ENCODE measurements at regions of chr6 and their contacts with region 1.

Region 1: DNA sequence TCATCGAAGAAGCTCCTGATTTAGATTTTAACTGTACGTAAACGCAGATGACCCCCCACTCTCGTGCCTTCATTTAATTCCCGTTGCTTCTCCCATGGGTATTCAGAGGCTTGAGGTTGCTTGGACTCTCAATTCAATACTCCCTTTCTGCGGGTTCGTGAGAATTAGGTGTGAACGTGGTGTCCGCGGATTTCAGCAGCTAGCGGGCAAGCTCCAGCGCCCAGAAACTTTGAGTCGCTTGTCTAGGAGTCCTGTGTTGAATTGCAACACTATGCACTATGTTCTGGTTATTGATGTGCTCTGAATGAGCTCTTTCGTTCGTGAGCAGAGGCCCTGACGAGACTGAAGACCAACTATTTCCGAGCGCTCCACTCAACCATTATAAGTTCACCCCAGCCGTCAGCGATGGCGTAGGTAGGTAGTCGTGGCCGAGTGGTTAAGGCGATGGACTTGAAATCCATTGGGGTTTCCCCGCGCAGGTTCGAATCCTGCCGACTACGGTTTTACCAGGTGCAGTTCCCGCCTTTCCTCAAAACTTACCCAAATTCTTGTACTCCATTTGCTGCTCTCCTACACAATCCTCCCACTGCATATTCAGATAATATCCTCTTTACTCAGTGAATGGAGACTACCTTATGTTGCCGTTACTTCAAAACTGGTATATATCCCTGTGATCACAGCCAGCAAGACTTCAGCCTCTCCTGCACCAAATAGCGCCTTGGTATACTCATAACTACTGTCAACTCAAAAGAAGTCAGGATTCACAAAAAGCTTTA is 72.6 kb upstream of the ZNF184 start:
- DNase-seq: no peak
- H3K4me3 ChIP-seq: no peak overlapping the region
- H3K4me3 Mint-ChIP-seq: no peak overlapping the region
- H3K27ac Mint-ChIP-seq: no peak overlapping the region
- H3K4me1 ChIP-seq: peaks cover 4% of the 10 kb centered on the region
- H3K4me1 Mint-ChIP-seq: no peaks in the 10 kb centered on the region
- H3K27me3 ChIP-seq: no peaks in the 10 kb centered on the region
- H3K27me3 Mint-ChIP-seq: no peaks in the 10 kb centered on the region
- CTCF ChIP-seq: no peak

Region 2: DNA sequence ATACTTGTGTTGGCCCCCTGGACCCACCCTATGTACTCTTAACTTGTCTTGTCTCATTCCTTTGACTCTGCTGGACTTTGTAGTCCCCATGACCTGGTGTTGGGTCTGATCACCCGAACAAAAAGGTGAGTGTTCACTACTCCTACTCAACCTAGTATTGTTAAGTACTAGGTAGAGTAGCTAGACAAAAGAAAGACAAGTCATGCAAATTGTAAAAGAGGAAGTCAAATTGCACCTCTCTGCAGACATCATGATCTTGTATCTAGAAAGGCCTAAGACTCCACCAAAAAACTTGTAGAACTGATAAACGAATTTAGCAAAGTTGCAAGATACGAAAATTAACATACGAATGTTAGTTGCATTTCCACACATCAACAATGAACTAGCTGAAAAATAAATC is 192.6 kb before region 1 on chr6:
- CTCF ChIA-PET with region 1: interaction called, 10 read pairs
- POLR2A ChIA-PET with region 1: no interaction called
- intact Hi-C with region 1: no loop called
- DNase-seq: no peak
- H3K4me3 ChIP-seq: no peak overlapping the region
- H3K4me3 Mint-ChIP-seq: no peak overlapping the region
- H3K27ac Mint-ChIP-seq: no peak overlapping the region
- H3K4me1 ChIP-seq: no peaks in the 10 kb centered on the region
- H3K4me1 Mint-ChIP-seq: no peaks in the 10 kb centered on the region
- H3K27me3 ChIP-seq: no peaks in the 10 kb centered on the region
- H3K27me3 Mint-ChIP-seq: no peaks in the 10 kb centered on the region
- CTCF ChIP-seq: no peak

Region 3: GRCh38 chr6:27592481-27593199 is 47.2 kb after region 1 on chr6:
- CTCF ChIA-PET with region 1: no interaction called
- POLR2A ChIA-PET with region 1: no interaction called
- intact Hi-C with region 1: loop called (anchors 1 kb)
- DNase-seq: peak; percentile 67 to 82
- H3K4me3 ChIP-seq: peak overlapping the region; percentile 53
- H3K4me3 Mint-ChIP-seq: no peak overlapping the region
- H3K27ac Mint-ChIP-seq: no peak overlapping the region
- H3K4me1 ChIP-seq: no peaks in the 10 kb centered on the region
- H3K4me1 Mint-ChIP-seq: no peaks in the 10 kb centered on the region
- H3K27me3 ChIP-seq: no peaks in the 10 kb centered on the region
- H3K27me3 Mint-ChIP-seq: no peaks in the 10 kb centered on the region
- CTCF ChIP-seq: no peak

Region 4: GRCh38 chr6:27608916-27609883 is 63.7 kb after region 1 on chr6:
- CTCF ChIA-PET with region 1: no interaction called
- POLR2A ChIA-PET with region 1: no interaction called
- intact Hi-C with region 1: loop called (anchors 2 kb)
- DNase-seq: peak in 1 of 2 experiments; percentile 69
- H3K4me3 ChIP-seq: no peak overlapping the region
- H3K4me3 Mint-ChIP-seq: no peak overlapping the region
- H3K27ac Mint-ChIP-seq: no peak overlapping the region
- H3K4me1 ChIP-seq: no peaks in the 10 kb centered on the region
- H3K4me1 Mint-ChIP-seq: peaks cover 9% of the 10 kb centered on the region
- H3K27me3 ChIP-seq: no peaks in the 10 kb centered on the region
- H3K27me3 Mint-ChIP-seq: peaks cover 2% of the 10 kb centered on the region
- CTCF ChIP-seq: peak; percentile 61 to 79

Measured in Caco-2 (cell line).